Endothelial cell of umbilical vein (primary cell): ENCODE measurements at regions of chr3 and their contacts with region 1.

Region 1: DNA sequence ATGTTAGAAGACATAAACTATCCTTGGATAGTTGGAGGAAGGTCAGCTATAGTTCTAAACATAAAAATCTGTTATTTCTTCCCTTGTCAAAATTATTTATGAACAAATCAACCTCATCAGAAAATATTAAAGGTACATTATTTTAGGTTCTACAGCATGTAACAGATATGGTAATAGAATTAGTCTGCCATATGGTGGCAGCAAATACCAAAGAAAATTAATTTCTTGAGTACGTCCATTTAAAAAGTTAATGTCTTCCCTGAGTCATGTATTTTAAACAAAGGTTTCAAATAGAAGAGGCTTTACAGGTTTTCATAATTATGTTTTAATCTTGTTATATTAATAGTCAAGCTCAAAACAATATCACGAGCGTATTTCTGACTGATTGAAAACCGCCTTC is 17.9 kb upstream of the ANKRD28 start:
- DNase-seq: peak; percentile 61
- H3K4me3 ChIP-seq: no peak overlapping the region
- H3K27ac ChIP-seq: no peak overlapping the region
- H3K4me1 ChIP-seq: no peaks in the 10 kb centered on the region
- H3K27me3 ChIP-seq: no peaks in the 10 kb centered on the region
- CTCF ChIP-seq: peak; percentile 5 to 21
- POLR2A ChIP-seq: no peak

Region 2: DNA sequence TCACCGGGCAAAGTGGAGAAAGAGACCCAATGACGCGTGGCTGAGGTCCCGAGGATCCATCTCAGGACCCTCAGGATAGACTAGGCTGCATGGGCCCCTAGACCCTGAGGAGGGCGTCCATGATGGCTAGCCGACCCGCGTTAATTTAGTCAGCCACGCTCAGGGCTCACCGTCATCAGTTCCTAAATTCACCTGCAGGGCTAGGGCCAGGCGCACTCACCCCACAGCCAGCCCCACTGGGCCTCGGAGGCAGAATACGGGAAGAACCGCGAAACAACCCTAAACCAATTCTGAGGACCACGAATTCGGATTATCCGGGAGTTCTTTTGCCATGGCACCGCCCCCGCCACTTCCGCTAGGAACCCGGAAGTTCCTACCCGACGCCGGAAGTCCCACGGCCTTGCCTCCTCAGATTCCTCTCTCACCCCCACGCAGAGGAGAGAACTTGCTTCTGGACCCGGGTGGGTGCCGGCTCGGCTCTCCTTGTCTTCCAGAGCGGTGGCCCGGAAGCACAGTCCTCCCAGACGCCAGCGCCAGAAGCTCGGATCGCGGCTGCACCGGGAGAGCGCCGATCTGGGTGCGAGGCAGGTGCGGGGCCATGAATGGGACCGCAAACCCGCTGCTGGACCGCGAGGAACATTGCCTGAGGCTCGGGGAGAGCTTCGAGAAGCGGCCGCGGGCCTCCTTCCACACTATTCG is 388.4 kb before region 1 on chr3 and contains the starts of genes EAF1 and METTL6:
- CTCF ChIA-PET with region 1: no interaction called
- POLR2A ChIA-PET with region 1: no interaction called
- dilution Hi-C with region 1: no loop called
- intact Hi-C with region 1: loop called (anchors 5 kb)
- DNase-seq: peak; percentile 72
- H3K4me3 ChIP-seq: peak within 1 kb of the TSS; percentile 70 to 90 (median 86)
- H3K27ac ChIP-seq: peak within 1 kb of the TSS; percentile 47
- H3K4me1 ChIP-seq: peaks cover 17% of the 10 kb centered on the region
- H3K27me3 ChIP-seq: no peaks in the 10 kb centered on the region
- CTCF ChIP-seq: peak; percentile 4 to 28
- POLR2A ChIP-seq: peak; percentile 66
- total RNA-seq, gene EAF1: 16.0 and 18.2 TPM in 2 replicates
- total RNA-seq, gene METTL6: 11.7 and 19.5 TPM in 2 replicates

Region 3: DNA sequence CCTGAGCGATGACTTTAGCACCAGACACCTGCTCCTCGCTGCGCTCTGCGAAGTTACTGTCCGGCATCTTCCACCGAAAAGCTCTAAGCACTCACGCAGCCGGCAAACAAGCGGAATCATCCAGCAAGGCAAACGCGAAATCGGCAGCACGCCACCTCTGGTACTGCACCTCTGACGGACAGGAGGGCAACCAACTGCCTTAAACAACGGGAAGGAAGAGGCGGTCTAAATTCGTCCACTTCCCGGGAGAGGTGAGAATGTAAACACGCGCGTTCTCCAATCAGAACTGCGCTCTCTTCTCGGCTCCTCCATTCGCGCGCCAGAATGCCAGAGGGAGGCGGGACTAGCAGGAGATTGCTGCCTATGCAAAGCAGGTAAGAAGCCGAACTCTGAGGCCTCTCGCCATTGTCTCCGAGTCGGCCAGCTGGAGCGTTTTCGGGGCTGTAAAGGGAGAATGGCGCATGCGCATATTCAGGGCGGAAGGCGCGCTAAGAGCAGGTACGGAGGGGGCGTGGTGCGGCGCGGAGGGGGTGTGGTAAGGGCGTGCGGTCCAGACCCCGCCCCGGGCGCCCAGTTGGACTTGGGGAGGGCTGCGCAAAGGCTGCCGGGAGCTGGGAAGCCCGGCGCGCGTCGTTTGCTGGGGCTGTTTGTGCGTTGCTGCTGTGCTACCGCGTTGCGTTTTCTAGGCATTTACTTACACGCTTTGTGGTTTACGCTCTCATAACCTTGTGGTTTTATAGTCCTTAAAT is 214.1 kb before region 1 on chr3 and contains the starts of genes BTD and HACL1:
- CTCF ChIA-PET with region 1: interaction called, 9 read pairs
- POLR2A ChIA-PET with region 1: no interaction called
- dilution Hi-C with region 1: no loop called
- intact Hi-C with region 1: loop called (anchors 1 kb)
- DNase-seq: peak; percentile 100
- H3K4me3 ChIP-seq: peak within 1 kb of the TSS; percentile 73 to 86 (median 74)
- H3K27ac ChIP-seq: peak within 1 kb of the TSS; percentile 61
- H3K4me1 ChIP-seq: peaks cover 16% of the 10 kb centered on the region
- H3K27me3 ChIP-seq: no peaks in the 10 kb centered on the region
- CTCF ChIP-seq: no peak
- POLR2A ChIP-seq: peak; percentile 94
- total RNA-seq, gene BTD: 18.7 and 20.3 TPM in 2 replicates
- total RNA-seq, gene HACL1: 27.4 and 29.9 TPM in 2 replicates

Region 4: DNA sequence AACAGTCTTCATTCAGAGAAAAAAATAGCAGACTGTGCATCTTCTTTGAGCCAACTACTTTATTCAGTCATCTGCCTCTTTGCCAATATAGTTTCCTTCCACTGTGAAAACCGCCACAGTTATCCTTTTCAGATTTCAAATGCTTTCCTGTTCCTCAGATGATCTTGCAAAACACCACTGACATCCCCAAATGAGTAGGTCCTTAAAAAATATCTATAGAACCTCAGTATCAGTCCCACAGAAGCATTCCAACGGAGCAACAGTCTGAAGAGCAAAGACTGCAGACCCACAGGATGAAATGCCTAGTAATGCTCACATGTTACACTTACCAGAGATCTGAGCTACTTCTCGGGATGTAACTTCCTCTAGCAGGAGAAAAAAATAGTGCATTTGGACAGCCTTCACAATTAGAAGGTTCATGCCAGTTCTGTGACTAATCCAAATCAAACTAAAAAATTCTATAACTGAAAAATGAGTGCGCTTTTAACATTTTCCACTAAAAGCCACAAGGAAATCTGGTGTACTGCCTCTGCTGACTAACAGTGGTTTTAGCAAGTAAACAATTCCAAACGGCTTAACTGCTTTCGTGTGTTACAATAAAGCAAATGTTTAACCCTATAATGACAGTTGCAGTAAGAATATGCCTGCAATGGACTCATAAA is 17.9 kb before region 1 on chr3 and contains the start of gene ANKRD28:
- CTCF ChIA-PET with region 1: interaction called, 28 read pairs
- POLR2A ChIA-PET with region 1: no interaction called
- dilution Hi-C with region 1: no loop called
- intact Hi-C with region 1: no loop called
- DNase-seq: peak; percentile 95
- H3K4me3 ChIP-seq: peak within 1 kb of the TSS; percentile 26 to 100 (median 84)
- H3K27ac ChIP-seq: peak within 1 kb of the TSS; percentile 96
- H3K4me1 ChIP-seq: peaks cover 26% of the 10 kb centered on the region
- H3K27me3 ChIP-seq: no peaks in the 10 kb centered on the region
- CTCF ChIP-seq: peak in 1 of 2 donors; percentile 31
- POLR2A ChIP-seq: no peak
- total RNA-seq, gene ANKRD28: 82.2 and 97.3 TPM in 2 replicates

Region 5: GRCh38 chr3:16247276-16248061 is 431.8 kb after region 1 on chr3:
- CTCF ChIA-PET with region 1: interaction called, 9 read pairs
- POLR2A ChIA-PET with region 1: no interaction called
- dilution Hi-C with region 1: no loop called
- intact Hi-C with region 1: loop called (anchors 1 kb)
- DNase-seq: peak; percentile 72
- H3K4me3 ChIP-seq: no peak overlapping the region
- H3K27ac ChIP-seq: no peak overlapping the region
- H3K4me1 ChIP-seq: peaks cover 11% of the 10 kb centered on the region
- H3K27me3 ChIP-seq: no peaks in the 10 kb centered on the region
- CTCF ChIP-seq: peak; percentile 86 to 87
- POLR2A ChIP-seq: no peak

Region 6: GRCh38 chr3:16309558-16309957 is 493.9 kb after region 1 on chr3:
- CTCF ChIA-PET with region 1: no interaction called
- POLR2A ChIA-PET with region 1: no interaction called
- dilution Hi-C with region 1: no loop called
- intact Hi-C with region 1: no loop called
- DNase-seq: peak; percentile 53
- H3K4me3 ChIP-seq: no peak overlapping the region
- H3K27ac ChIP-seq: no peak overlapping the region
- H3K4me1 ChIP-seq: peaks cover 4% of the 10 kb centered on the region
- H3K27me3 ChIP-seq: no peaks in the 10 kb centered on the region
- CTCF ChIP-seq: no peak
- POLR2A ChIP-seq: no peak

Region 7: GRCh38 chr3:16550676-16551341 is 735.1 kb after region 1 on chr3:
- CTCF ChIA-PET with region 1: interaction called, 3 read pairs
- POLR2A ChIA-PET with region 1: no interaction called
- dilution Hi-C with region 1: no loop called
- intact Hi-C with region 1: loop called (anchors 1 kb)
- DNase-seq: peak; percentile 87
- H3K4me3 ChIP-seq: no peak overlapping the region
- H3K27ac ChIP-seq: no peak overlapping the region
- H3K4me1 ChIP-seq: peaks cover 6% of the 10 kb centered on the region
- H3K27me3 ChIP-seq: peaks cover 3 to 4% of the 10 kb centered on the region in 2 experiments
- CTCF ChIP-seq: peak; percentile 72 to 88
- POLR2A ChIP-seq: no peak